Caco-2 (cell line): ENCODE measurements at regions of chr1 and their contacts with region 1.

Region 1: GRCh38 chr1:39816415-39817090 is 27.9 kb upstream of the BMP8B start:
- DNase-seq: peak; percentile 74 to 82
- H3K4me3 ChIP-seq: no peak overlapping the region
- H3K4me3 Mint-ChIP-seq: peak overlapping the region; percentile 62
- H3K27ac Mint-ChIP-seq: peak overlapping the region; percentile 90
- H3K4me1 ChIP-seq: peaks cover 7% of the 10 kb centered on the region
- H3K4me1 Mint-ChIP-seq: no peaks in the 10 kb centered on the region
- H3K27me3 ChIP-seq: no peaks in the 10 kb centered on the region
- H3K27me3 Mint-ChIP-seq: no peaks in the 10 kb centered on the region
- CTCF ChIP-seq: peak; percentile 52 to 67

Region 2: GRCh38 chr1:39829791-39830533 is 13.4 kb after region 1 on chr1:
- CTCF ChIA-PET with region 1: interaction called, 4 read pairs
- POLR2A ChIA-PET with region 1: interaction called, 3 read pairs
- intact Hi-C with region 1: loop called (anchors 1 kb)
- DNase-seq: no peak
- H3K4me3 ChIP-seq: no peak overlapping the region
- H3K4me3 Mint-ChIP-seq: no peak overlapping the region
- H3K27ac Mint-ChIP-seq: peak overlapping the region; percentile 42
- H3K4me1 ChIP-seq: peaks cover 38% of the 10 kb centered on the region
- H3K4me1 Mint-ChIP-seq: peaks cover 45% of the 10 kb centered on the region
- H3K27me3 ChIP-seq: no peaks in the 10 kb centered on the region
- H3K27me3 Mint-ChIP-seq: no peaks in the 10 kb centered on the region
- CTCF ChIP-seq: no peak

Region 3: GRCh38 chr1:39886757-39887231 is 70.2 kb after region 1 on chr1:
- CTCF ChIA-PET with region 1: no interaction called
- POLR2A ChIA-PET with region 1: interaction called, 11 read pairs
- intact Hi-C with region 1: no loop called
- DNase-seq: no peak
- H3K4me3 ChIP-seq: no peak overlapping the region
- H3K4me3 Mint-ChIP-seq: no peak overlapping the region
- H3K27ac Mint-ChIP-seq: no peak overlapping the region
- H3K4me1 ChIP-seq: peaks cover 8% of the 10 kb centered on the region
- H3K4me1 Mint-ChIP-seq: peaks cover 17% of the 10 kb centered on the region
- H3K27me3 ChIP-seq: no peaks in the 10 kb centered on the region
- H3K27me3 Mint-ChIP-seq: no peaks in the 10 kb centered on the region
- CTCF ChIP-seq: no peak

Region 4: GRCh38 chr1:39901698-39902459 is 85.3 kb after region 1 on chr1 and contains the start of gene MYCL:
- CTCF ChIA-PET with region 1: interaction called, 32 read pairs
- POLR2A ChIA-PET with region 1: interaction called, 4 read pairs
- intact Hi-C with region 1: loop called (anchors 1 kb)
- DNase-seq: peak; percentile 91 to 92
- H3K4me3 ChIP-seq: peak within 1 kb of the TSS; percentile 68
- H3K4me3 Mint-ChIP-seq: peak within 1 kb of the TSS; percentile 76
- H3K27ac Mint-ChIP-seq: no peak within 1 kb of the TSS
- H3K4me1 ChIP-seq: peaks cover 12% of the 10 kb centered on the region
- H3K4me1 Mint-ChIP-seq: no peaks in the 10 kb centered on the region
- H3K27me3 ChIP-seq: no peaks in the 10 kb centered on the region
- H3K27me3 Mint-ChIP-seq: no peaks in the 10 kb centered on the region
- CTCF ChIP-seq: peak; percentile 47 to 82
- total RNA-seq, gene MYCL: 7.2 and 7.8 TPM in 2 replicates

Region 5: DNA sequence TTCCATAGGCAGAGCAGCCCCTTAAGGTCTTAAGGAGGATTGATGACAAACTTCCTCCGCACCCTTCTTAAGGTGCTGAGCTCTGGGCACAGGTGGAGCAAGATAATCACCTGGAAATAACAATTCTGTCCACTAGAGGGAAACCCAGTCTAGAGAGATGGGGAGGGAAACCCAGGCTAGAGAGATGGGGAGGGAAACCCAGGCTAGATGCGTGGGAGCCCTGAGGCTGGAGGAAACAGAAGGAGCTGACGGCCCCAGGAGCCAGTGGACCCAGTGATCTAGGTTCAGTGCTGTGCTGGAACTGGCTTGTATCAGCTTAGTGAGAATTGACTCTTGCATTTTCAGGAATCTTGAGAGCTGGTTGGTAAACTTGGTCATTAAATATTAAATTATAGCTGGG is 103.0 kb after region 1 on chr1:
- CTCF ChIA-PET with region 1: interaction called, 4 read pairs
- POLR2A ChIA-PET with region 1: no interaction called
- intact Hi-C with region 1: loop called (anchors 5 kb)
- DNase-seq: peak; percentile 53 to 71
- H3K4me3 ChIP-seq: no peak overlapping the region
- H3K4me3 Mint-ChIP-seq: no peak overlapping the region
- H3K27ac Mint-ChIP-seq: no peak overlapping the region
- H3K4me1 ChIP-seq: no peaks in the 10 kb centered on the region
- H3K4me1 Mint-ChIP-seq: no peaks in the 10 kb centered on the region
- H3K27me3 ChIP-seq: no peaks in the 10 kb centered on the region
- H3K27me3 Mint-ChIP-seq: no peaks in the 10 kb centered on the region
- CTCF ChIP-seq: peak; percentile 48 to 66

Region 6: GRCh38 chr1:39952359-39953110 is 136.0 kb after region 1 on chr1:
- CTCF ChIA-PET with region 1: no interaction called
- POLR2A ChIA-PET with region 1: no interaction called
- intact Hi-C with region 1: no loop called
- DNase-seq: no peak
- H3K4me3 ChIP-seq: no peak overlapping the region
- H3K4me3 Mint-ChIP-seq: no peak overlapping the region
- H3K27ac Mint-ChIP-seq: no peak overlapping the region
- H3K4me1 ChIP-seq: no peaks in the 10 kb centered on the region
- H3K4me1 Mint-ChIP-seq: no peaks in the 10 kb centered on the region
- H3K27me3 ChIP-seq: no peaks in the 10 kb centered on the region
- H3K27me3 Mint-ChIP-seq: peaks cover 2% of the 10 kb centered on the region
- CTCF ChIP-seq: no peak

Region 7: GRCh38 chr1:39973503-39974135 is 157.1 kb after region 1 on chr1:
- CTCF ChIA-PET with region 1: interaction called, 3 read pairs
- POLR2A ChIA-PET with region 1: no interaction called
- intact Hi-C with region 1: loop called (anchors 1 kb)
- DNase-seq: peak; percentile 65 to 67
- H3K4me3 ChIP-seq: no peak overlapping the region
- H3K4me3 Mint-ChIP-seq: no peak overlapping the region
- H3K27ac Mint-ChIP-seq: no peak overlapping the region
- H3K4me1 ChIP-seq: peaks cover 3% of the 10 kb centered on the region; the same call in 1 of the 2 replicates
- H3K4me1 Mint-ChIP-seq: peaks cover 7% of the 10 kb centered on the region
- H3K27me3 ChIP-seq: no peaks in the 10 kb centered on the region
- H3K27me3 Mint-ChIP-seq: no peaks in the 10 kb centered on the region
- CTCF ChIP-seq: peak; percentile 76 to 80

Region 8: DNA sequence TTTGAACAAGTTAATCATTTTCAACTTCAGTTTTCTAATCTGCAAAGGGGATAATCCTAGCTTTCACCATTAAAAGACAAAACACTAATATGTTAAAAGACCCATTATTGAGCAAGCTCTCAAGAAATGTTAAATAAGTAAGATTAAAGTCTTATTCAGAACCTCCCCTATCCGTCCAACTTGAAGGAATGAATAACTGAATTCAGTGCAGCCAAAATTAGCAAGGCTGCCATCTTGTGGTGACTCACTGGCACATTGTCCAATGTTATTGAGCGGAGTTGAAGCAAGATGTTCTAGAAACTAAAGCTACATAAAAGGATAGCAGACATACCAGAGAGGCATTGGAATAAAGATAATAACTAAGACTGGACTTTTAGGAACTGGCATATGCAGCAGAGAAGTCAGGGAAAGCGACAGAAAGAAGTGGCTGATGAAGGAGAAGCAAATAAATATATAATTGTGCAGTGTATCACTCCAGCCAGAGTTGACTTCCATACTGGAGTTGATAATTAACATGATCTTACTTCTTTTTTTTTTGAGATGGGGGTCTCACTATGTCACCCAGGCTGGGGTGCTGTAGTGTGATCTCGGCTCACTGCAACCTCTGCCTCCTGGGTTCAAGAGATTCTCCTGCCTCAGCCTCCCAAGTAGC is 215.8 kb after region 1 on chr1:
- CTCF ChIA-PET with region 1: no interaction called
- POLR2A ChIA-PET with region 1: no interaction called
- intact Hi-C with region 1: loop called (anchors 2 kb)
- DNase-seq: peak; percentile 37 to 40
- H3K4me3 ChIP-seq: no peak overlapping the region
- H3K4me3 Mint-ChIP-seq: no peak overlapping the region
- H3K27ac Mint-ChIP-seq: no peak overlapping the region
- H3K4me1 ChIP-seq: peaks cover 3% of the 10 kb centered on the region; the same call in 1 of the 2 replicates
- H3K4me1 Mint-ChIP-seq: peaks cover 13% of the 10 kb centered on the region
- H3K27me3 ChIP-seq: no peaks in the 10 kb centered on the region
- H3K27me3 Mint-ChIP-seq: no peaks in the 10 kb centered on the region
- CTCF ChIP-seq: peak; percentile 48 to 52